Right ventricle myocardium superior (tissue), 1 donor: ENCODE measurements at regions of chr4 and their contacts with region 1.

Region 1: GRCh38 chr4:24686871-24687680 is 102.7 kb upstream of the DHX15 start:
- DNase-seq: no peak
- ATAC-seq: peak; percentile 47

Region 2: GRCh38 chr4:24488399-24489164 is 198.5 kb before region 1 on chr4:
- intact Hi-C with region 1: loop called (anchors 2 kb)
- DNase-seq: peak; percentile 88
- ATAC-seq: peak; percentile 90